Gastrocnemius medialis (tissue), 4 donors: ENCODE measurements at regions of chr1 and their contacts with region 1.

Region 1: GRCh38 chr1:184535191-184535970 is 148.6 kb downstream of the C1orf21 start:
- DNase-seq: no peak
- ATAC-seq: peak; percentile 59 to 74
- H3K4me3 ChIP-seq: no peak overlapping the region
- H3K27ac ChIP-seq: peak overlapping the region; percentile 72 to 96 (median 90)
- H3K4me1 ChIP-seq: peaks cover 55 to 58% of the 10 kb centered on the region in 2 donors
- H3K27me3 ChIP-seq: no peaks in the 10 kb centered on the region
- CTCF ChIP-seq: no peak
- POLR2A ChIP-seq: peak in 1 of 2 donors; percentile 30

Region 2: GRCh38 chr1:184622136-184622823 is 86.9 kb after region 1 on chr1:
- in situ Hi-C with region 1: no loop called
- intact Hi-C with region 1: loop called (anchors 5 kb)
- DNase-seq: peak; percentile 90 to 92
- ATAC-seq: peak; percentile 79 to 83
- H3K4me3 ChIP-seq: no peak overlapping the region
- H3K27ac ChIP-seq: peak overlapping the region; percentile 87 to 97 (median 88)
- H3K4me1 ChIP-seq: peaks cover 74 to 84% of the 10 kb centered on the region in 2 donors
- H3K27me3 ChIP-seq: no peaks in the 10 kb centered on the region
- CTCF ChIP-seq: no peak
- POLR2A ChIP-seq: peak; percentile 22 to 61